Activated naive CD4-positive, alpha-beta T cell treated with anti-CD3 and anti-CD28 coated beads, Interleukin-2, amount 10 ng/mL, durations not matched to agents 7 days and 5 days (primary cell): ENCODE measurements at regions of chr7 and their contacts with region 1.

Region 1: DNA sequence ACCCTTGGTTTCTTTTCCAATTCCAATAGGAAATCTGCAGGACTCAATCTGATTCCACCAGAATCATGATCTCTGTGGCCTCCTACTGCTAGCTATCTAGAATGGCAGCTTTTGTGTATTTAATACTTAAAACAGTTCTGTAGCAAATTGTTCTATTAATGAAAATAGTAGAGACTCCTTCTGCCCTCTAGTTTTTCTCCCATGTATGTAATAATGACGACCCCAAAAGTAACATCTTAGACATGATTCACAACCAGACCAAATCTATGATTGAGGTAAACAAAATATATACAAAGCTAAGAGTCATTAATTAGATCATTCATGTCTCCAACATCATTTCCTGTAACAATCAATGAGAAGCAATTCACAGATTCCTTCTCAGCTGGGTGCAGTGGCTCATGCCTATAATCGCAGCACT is 259.1 kb upstream of the MKLN1 start:
- DNase-seq: no peak
- H3K4me3 Mint-ChIP-seq: no peak overlapping the region
- H3K27ac Mint-ChIP-seq: peak overlapping the region; percentile 20
- H3K4me1 Mint-ChIP-seq: peaks cover 38% of the 10 kb centered on the region
- H3K27me3 Mint-ChIP-seq: no peaks in the 10 kb centered on the region

Region 2: GRCh38 chr7:130853503-130854279 is 214.9 kb before region 1 on chr7:
- CTCF ChIA-PET with region 1: no interaction called
- DNase-seq: no peak
- H3K4me3 Mint-ChIP-seq: no peak overlapping the region
- H3K27ac Mint-ChIP-seq: no peak overlapping the region
- H3K4me1 Mint-ChIP-seq: no peaks in the 10 kb centered on the region
- H3K27me3 Mint-ChIP-seq: no peaks in the 10 kb centered on the region

Region 3: DNA sequence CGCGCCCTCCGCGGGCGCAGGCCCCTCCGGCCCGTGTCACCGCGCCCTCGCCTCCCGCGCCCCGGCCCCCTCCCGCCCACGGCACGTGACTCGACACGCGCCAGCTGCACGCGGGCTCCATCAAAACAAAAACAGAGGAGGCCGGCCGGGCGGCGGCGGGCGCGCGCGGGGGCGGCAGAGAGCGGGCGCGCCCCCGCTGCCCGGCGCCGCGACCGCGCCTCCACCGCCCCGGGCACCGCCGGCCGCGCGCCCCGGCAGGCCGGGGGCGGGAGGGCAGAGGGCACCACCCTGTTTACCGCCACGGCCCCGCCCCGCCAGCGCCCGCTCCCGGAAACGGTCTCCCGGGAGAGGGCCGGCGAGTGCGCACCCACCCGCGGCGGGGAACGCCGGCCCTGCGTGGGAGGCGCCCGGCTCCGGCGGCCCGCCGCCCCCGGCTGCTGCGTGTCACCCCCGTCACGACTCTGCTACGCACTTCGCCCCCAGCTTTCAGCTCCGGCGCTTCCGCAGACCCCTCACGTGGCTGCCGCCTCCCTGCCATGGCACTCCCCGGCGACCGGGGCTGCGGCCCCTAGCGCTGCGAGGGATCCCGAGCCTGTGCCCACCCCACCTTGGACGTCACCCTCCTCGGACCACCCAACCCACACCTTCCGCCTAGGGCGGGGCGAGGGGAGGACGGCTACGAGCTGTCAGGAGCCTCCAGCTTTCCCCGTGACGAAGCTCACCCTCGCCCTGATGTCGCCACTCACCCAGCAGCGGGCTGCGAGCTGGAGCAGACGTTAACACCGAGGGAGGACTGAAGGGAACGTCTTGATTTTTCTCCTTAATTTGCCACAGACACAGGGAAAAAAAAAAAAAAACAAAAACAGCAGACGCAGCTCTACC is 37.4 kb after region 1 on chr7:
- CTCF ChIA-PET with region 1: interaction called, 10 read pairs
- DNase-seq: peak; percentile 85
- H3K4me3 Mint-ChIP-seq: peak overlapping the region; percentile 99
- H3K27ac Mint-ChIP-seq: peak overlapping the region; percentile 98
- H3K4me1 Mint-ChIP-seq: peaks cover 63% of the 10 kb centered on the region
- H3K27me3 Mint-ChIP-seq: no peaks in the 10 kb centered on the region

Region 4: GRCh38 chr7:131302876-131303707 is 234.5 kb after region 1 on chr7:
- CTCF ChIA-PET with region 1: interaction called, 11 read pairs
- DNase-seq: peak; percentile 44
- H3K4me3 Mint-ChIP-seq: no peak overlapping the region
- H3K27ac Mint-ChIP-seq: no peak overlapping the region
- H3K4me1 Mint-ChIP-seq: no peaks in the 10 kb centered on the region
- H3K27me3 Mint-ChIP-seq: peaks cover 4% of the 10 kb centered on the region

Region 5: DNA sequence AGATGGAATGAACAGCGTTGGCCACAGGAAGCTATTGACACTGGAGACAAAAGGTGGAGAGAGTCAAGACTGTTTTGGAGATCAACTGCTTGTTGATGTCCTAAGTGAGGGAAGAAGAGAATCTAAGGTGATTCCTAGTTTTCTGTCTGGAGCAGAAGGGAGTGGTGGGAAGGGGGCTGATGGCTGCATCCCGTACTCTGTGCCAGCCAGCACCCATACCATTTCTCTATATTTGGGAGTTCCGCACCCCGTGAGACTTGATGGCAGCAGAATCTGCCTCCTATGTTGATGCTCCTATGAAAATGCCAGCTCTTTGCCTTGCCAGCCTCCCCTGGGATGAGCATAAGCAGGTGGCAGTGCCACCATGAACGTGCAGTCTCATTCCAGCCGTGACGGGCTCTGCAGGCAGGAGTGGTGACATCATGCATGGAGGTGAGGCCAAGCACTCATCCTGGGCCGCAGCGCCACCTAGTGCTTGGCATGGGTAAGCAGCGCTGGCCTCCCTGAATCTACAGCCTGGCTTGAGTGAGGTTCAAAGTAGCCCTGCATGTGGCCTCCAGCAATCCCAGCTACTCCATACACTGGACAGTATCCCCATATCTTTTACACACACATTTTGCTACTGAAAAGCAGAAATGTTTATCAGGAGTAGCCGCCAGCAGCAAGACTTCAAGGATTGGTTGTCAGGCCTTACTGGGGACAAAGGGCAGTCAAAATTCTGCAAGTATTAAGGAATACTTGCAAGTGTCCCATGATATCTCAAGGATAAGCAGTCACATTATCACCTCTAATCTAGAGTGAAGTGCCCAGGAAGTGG is 444.8 kb after region 1 on chr7:
- CTCF ChIA-PET with region 1: interaction called, 11 read pairs
- DNase-seq: peak; percentile 84
- H3K4me3 Mint-ChIP-seq: no peak overlapping the region
- H3K27ac Mint-ChIP-seq: no peak overlapping the region
- H3K4me1 Mint-ChIP-seq: peaks cover 19% of the 10 kb centered on the region
- H3K27me3 Mint-ChIP-seq: peaks cover 31% of the 10 kb centered on the region